Breast epithelium (tissue), 4 donors: ENCODE measurements at regions of chr20 and their contacts with region 1.

Region 1: DNA sequence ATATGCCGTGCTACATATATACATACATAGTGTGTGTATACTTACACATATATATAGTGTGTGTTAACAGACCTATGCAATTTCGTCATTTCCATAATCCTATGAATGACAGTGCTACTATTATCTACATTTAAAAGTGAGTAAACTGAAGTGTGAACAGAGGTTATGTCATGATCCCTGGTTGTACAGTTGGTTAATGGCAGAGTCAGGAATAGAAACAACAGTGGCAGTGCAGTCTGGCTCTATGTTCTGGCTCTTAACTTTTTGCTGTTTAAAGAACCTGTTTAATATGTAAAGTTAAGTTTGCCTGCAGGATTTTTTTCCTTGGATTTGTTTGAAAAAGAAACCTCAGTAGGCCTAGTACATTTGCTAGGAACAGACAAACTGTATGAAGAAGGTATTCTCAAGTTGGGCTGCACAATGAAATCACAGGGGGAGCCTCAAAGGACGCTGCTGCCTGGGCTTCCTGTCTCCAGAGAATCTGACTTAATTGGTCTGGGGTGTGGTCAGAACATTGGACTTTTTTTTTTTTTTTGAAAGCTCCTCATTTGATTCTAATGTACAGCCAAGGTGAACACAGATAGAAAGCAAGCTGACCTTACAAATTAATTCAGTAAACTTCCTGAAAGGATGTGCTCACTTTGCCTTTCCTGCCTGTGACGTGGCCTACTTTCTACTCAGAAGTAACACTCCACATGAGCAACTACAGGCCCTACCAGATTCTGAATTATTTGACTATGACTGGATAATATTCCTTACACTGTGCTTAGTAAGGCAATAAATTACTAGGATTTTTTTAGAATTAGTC is 29.4 kb downstream of the PLCB1 start:
- DNase-seq: no peak
- H3K4me3 ChIP-seq: no peak overlapping the region
- H3K27ac ChIP-seq: peak overlapping the region in 1 of 2 donors; percentile 9
- H3K4me1 ChIP-seq: peaks cover 0 to 4% of the 10 kb centered on the region in 2 donors
- H3K27me3 ChIP-seq: no peaks in the 10 kb centered on the region
- CTCF ChIP-seq: no peak
- POLR2A ChIP-seq: no peak

Region 2: GRCh38 chr20:8019246-8019997 is 142.0 kb before region 1 on chr20 and contains the start of gene TMX4:
- intact Hi-C with region 1: loop called (anchors 5 kb)
- DNase-seq: peak; percentile 94 to 96
- H3K4me3 ChIP-seq: peak within 1 kb of the TSS; percentile 71 to 89 (median 80)
- H3K27ac ChIP-seq: peak within 1 kb of the TSS; percentile 97 to 99
- H3K4me1 ChIP-seq: no peaks in the 10 kb centered on the region
- H3K27me3 ChIP-seq: no peaks in the 10 kb centered on the region
- CTCF ChIP-seq: peak; percentile 37 to 68 (median 62)
- POLR2A ChIP-seq: peak; percentile 77
- total RNA-seq, gene TMX4: 40.0 to 61.9 (median 60.7) TPM

Region 3: GRCh38 chr20:8127553-8128255 is 33.8 kb before region 1 on chr20:
- intact Hi-C with region 1: no loop called
- DNase-seq: no peak
- H3K4me3 ChIP-seq: no peak overlapping the region
- H3K27ac ChIP-seq: no peak overlapping the region
- H3K4me1 ChIP-seq: no peaks in the 10 kb centered on the region
- H3K27me3 ChIP-seq: no peaks in the 10 kb centered on the region
- CTCF ChIP-seq: no peak
- POLR2A ChIP-seq: no peak